Posterior vena cava (tissue), 2 donors: ENCODE measurements at regions of chr1 and their contacts with region 1.

Region 1: GRCh38 chr1:168845140-168845539 is 116.1 kb upstream of the DPT start:
- DNase-seq: no peak

Region 2: GRCh38 chr1:168190284-168190870 is 654.8 kb before region 1 on chr1:
- intact Hi-C with region 1: loop called in 1 of 2 experiments (anchors 5 kb)
- DNase-seq: no peak

Region 3: DNA sequence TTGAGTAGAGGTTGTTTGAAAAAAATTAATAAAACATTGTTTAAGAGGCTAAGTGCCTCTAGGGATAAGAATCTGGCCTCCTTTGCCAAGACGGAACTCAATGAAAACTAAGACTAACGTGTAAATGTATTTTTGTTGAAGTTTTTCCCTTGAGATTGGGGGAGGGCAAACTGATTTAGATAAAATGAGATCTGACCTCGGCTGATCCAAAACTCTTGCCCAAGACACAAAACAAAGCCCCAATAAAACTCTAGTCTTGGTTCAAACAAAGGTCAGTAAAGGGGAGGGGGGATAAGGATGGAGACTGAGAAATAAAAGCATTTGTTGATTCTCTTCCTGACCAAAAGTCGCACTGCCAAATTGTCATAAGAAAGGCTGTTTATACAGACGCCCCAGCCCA is 18.6 kb after region 1 on chr1:
- intact Hi-C with region 1: no loop called
- DNase-seq: no peak

Region 4: GRCh38 chr1:168879916-168880734 is 35.0 kb after region 1 on chr1:
- intact Hi-C with region 1: no loop called
- DNase-seq: peak; percentile 70

Region 5: GRCh38 chr1:169711469-169712281 is 866.5 kb after region 1 on chr1 and contains the start of gene SELL:
- intact Hi-C with region 1: loop called in 1 of 2 experiments (anchors 5 kb)
- DNase-seq: no peak
- total RNA-seq, gene SELL: 5.5 to 11.6 TPM